ENCODE measurements at regions of chr12 and their contacts with region 1.

Region 1: GRCh38 chr12:101839324-101840283 is 8.8 kb upstream of the GNPTAB start:
- DNase-seq: no peak
- H3K4me3 ChIP-seq: no peak overlapping the region
- H3K27me3 ChIP-seq: no peaks in the 10 kb centered on the region
- CTCF ChIP-seq: peak; percentile 86

Region 2: GRCh38 chr12:101287357-101287756 is 552.2 kb before region 1 on chr12:
- CTCF ChIA-PET with region 1: no interaction called
- POLR2A ChIA-PET with region 1: no interaction called
- DNase-seq: no peak
- H3K4me3 ChIP-seq: no peak overlapping the region
- H3K27me3 ChIP-seq: no peaks in the 10 kb centered on the region
- CTCF ChIP-seq: no peak

Region 3: DNA sequence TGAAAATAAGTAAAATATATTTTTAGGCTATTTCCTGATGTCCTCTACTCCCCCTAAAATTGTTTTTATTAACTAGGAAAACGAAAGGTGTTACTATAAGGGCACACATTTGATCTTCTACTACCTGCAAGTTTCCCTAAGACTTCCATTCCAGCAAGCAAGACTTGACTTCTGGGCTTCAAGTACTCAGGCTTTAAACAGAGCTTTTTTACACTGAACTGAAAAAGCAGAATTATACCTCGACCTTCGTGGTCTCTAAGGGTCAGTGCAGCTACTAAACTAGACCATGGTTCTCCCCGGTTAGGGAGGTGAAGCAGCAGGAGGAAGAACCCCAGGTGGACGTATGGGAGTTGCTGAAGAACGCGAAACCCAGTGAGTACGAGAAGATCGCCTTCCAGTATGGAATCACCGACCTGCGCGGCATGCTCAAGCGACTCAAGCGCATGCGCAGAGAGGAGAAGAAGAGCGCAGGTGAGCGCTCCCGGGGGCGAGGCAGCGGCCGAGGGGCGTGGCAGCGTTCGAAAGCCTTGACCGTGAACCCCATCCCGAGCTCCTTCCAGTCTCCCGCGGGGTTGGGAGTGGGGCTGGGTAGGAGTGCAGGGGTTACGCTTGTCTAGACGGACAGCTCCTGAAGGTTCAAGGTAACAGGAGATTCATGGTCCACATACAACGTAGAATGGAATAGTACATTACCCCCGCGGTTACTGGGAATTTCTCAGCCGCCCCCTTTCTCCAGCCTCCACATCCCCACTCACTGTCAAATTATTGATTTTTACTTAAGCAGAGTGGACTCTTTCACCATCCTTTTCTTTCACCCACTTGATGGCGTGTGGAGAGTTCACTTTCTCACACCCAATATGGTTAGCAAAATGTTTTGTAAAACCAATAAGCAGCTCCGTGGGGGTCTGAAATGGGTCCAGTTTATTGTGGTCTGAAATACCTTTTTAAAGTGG is 197.2 kb before region 1 on chr12:
- CTCF ChIA-PET with region 1: no interaction called
- POLR2A ChIA-PET with region 1: interaction called, 20 read pairs
- DNase-seq: no peak
- H3K4me3 ChIP-seq: no peak overlapping the region
- H3K27me3 ChIP-seq: peaks cover 1% of the 10 kb centered on the region; the same call in 1 of the 2 replicates
- CTCF ChIP-seq: no peak

Region 4: DNA sequence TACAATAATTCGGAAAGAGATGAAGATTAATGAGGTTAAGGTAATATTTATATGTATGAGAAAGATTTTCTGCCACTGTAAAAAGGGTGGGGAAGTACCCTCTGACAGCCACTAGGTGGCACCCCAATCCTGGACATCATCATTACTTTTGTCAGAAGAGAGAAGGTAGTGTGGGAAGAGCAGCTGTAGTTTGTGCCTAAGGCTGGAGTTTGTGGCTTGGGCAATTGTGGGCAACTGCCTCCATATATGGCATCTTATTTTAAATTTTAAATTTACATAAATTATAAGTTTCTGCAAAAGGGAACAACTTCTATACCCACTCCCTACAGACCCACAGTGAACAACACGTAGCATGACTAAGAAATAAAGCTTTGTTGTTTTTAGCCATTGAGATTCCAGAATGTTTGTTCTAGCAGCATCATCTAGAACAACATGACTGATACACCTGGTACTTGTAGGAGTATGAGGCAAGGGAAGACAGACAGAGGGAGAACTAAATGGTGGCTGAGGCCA is 65.9 kb before region 1 on chr12:
- CTCF ChIA-PET with region 1: interaction called, 35 read pairs
- POLR2A ChIA-PET with region 1: no interaction called
- DNase-seq: peak; percentile 11
- H3K4me3 ChIP-seq: no peak overlapping the region
- H3K27me3 ChIP-seq: no peaks in the 10 kb centered on the region
- CTCF ChIP-seq: peak; percentile 80

Region 5: GRCh38 chr12:101780599-101780998 is 59.0 kb before region 1 on chr12:
- CTCF ChIA-PET with region 1: interaction called, 17 read pairs
- POLR2A ChIA-PET with region 1: no interaction called
- DNase-seq: no peak
- H3K4me3 ChIP-seq: no peak overlapping the region
- H3K27me3 ChIP-seq: no peaks in the 10 kb centered on the region
- CTCF ChIP-seq: no peak

Region 6: GRCh38 chr12:101854747-101855146 is 15.1 kb after region 1 on chr12:
- CTCF ChIA-PET with region 1: interaction called, 22 read pairs
- POLR2A ChIA-PET with region 1: no interaction called
- DNase-seq: no peak
- H3K4me3 ChIP-seq: no peak overlapping the region
- H3K27me3 ChIP-seq: no peaks in the 10 kb centered on the region
- CTCF ChIP-seq: no peak

Measured in BJ (cell line).